Esophagus muscularis mucosa (tissue), 4 donors: ENCODE measurements at regions of chr9 and their contacts with region 1.

Region 1: GRCh38 chr9:97468658-97469448 is 32.6 kb upstream of the TMOD1 start:
- DNase-seq: peak; percentile 93
- H3K4me3 ChIP-seq: no peak overlapping the region
- H3K27ac ChIP-seq: peak overlapping the region; percentile 68 to 79 (median 77)
- H3K4me1 ChIP-seq: peaks cover 15 to 23% (median 21%) of the 10 kb centered on the region in 4 donors
- H3K27me3 ChIP-seq: no peaks in the 10 kb centered on the region
- CTCF ChIP-seq: peak; percentile 75 to 95 (median 86)
- EP300 ChIP-seq: no peak
- POLR2A ChIP-seq: no peak

Region 2: DNA sequence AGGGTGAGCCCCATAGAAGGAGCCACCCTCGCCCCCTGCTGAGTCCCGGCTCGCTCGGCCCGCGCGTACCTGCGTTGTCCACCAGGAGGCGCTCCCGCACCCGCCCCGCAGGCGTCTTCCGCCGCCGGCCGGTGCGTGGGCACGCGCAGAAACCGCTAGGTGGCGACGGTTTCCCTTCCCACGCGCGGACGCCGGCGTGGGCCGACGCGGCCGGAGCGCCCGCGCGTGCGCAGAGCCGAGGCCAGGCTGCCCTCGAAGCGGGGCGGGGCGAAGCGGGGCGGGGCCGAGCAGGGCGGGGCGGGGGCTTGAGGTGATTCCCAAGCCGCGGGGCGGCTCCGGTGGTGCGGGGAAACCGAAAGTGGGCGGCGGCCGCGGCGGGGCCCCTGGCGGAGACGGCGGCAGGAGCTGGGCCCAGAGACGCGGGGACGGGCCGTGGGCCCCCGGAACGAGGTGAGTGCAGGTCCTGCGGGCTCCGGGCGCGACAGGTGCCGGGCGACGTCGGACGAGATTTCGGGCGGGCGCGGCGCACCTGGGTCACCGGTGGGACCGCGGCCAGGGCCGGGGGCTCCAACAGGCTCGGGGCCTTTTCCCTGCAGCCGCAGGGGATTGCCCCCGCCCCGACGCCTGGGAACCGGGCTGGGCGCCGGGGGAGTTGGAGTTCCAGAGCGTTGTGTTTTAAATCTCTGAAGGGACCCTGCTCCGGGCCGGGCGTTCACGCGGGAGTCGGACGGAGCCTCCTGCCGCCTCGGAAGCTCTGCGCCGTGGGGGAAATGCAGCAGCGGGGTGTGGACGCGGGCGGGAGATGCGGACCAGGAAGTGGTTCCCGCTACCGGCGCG is 56.8 kb before region 1 on chr9 and contains the start of gene TDRD7:
- intact Hi-C with region 1: loop called (anchors 5 kb)
- DNase-seq: no peak
- H3K4me3 ChIP-seq: peak within 1 kb of the TSS; percentile 80 to 96 (median 92)
- H3K27ac ChIP-seq: peak within 1 kb of the TSS; percentile 85 to 90 (median 88)
- H3K4me1 ChIP-seq: peaks cover 10 to 23% (median 16%) of the 10 kb centered on the region in 4 donors
- H3K27me3 ChIP-seq: no peaks in the 10 kb centered on the region
- CTCF ChIP-seq: peak; percentile 99
- EP300 ChIP-seq: no peak
- POLR2A ChIP-seq: no peak
- total RNA-seq, gene TDRD7: 15.4 to 22.9 (median 16.4) TPM

Region 3: DNA sequence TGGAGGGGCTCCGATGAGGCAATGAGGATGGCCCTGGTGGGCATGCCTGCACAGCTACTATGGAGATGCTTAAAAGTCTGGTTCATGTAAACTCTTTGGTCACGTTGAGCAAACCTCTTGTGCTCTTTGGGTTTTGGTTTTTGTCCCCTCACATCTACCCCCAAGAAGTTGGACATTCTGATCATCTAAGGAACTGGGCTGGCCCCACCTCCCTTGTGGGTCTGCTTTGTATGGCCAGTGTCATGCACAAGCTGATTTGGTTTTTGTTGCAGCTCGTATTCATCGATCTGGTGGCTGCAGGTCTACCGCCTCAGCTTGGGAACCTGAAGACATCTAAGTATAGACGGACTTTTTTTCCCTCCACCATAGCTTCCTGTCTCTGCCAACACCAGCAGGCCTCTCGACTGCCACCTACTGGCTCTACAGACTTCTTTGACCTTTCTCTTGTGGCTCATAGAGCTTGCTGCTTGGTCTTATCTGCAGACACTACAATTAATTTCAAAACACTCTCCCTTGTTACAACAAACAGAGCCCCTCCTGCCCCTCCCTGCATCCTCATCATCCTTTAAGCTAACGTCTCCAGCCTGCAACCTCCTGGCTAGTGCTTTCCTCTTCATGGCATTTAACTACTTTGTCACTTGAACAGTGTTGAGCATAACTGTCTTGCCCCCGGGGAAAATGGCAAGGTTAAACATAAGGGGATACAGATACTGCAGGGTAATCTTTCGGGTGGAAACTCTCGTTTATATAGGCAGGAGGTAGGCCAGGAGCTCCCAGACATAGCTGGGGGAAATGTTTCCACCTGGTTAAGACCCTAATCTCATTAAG is 129.8 kb after region 1 on chr9:
- intact Hi-C with region 1: loop called (anchors 5 kb)
- DNase-seq: peak; percentile 95
- H3K4me3 ChIP-seq: no peak overlapping the region
- H3K27ac ChIP-seq: peak overlapping the region; percentile 69 to 74 (median 72)
- H3K4me1 ChIP-seq: peaks cover 36 to 61% (median 49%) of the 10 kb centered on the region in 4 donors
- H3K27me3 ChIP-seq: no peaks in the 10 kb centered on the region
- CTCF ChIP-seq: peak; percentile 81 to 87 (median 83)
- EP300 ChIP-seq: no peak
- POLR2A ChIP-seq: no peak

Region 4: GRCh38 chr9:97615439-97616072 is 146.7 kb after region 1 on chr9:
- intact Hi-C with region 1: loop called (anchors 1 kb)
- DNase-seq: no peak
- H3K4me3 ChIP-seq: no peak overlapping the region
- H3K27ac ChIP-seq: peak overlapping the region in 3 of 4 donors; percentile 8 to 51 (median 12)
- H3K4me1 ChIP-seq: peaks cover 0 to 12% (median 10%) of the 10 kb centered on the region in 4 donors
- H3K27me3 ChIP-seq: no peaks in the 10 kb centered on the region
- CTCF ChIP-seq: peak; percentile 82 to 92 (median 89)
- EP300 ChIP-seq: no peak
- POLR2A ChIP-seq: no peak

Region 5: GRCh38 chr9:97696803-97697601 is 228.1 kb after region 1 on chr9 and contains the start of gene XPA:
- intact Hi-C with region 1: no loop called
- DNase-seq: peak; percentile 97
- H3K4me3 ChIP-seq: peak within 1 kb of the TSS; percentile 78 to 93 (median 87)
- H3K27ac ChIP-seq: peak within 1 kb of the TSS; percentile 92 to 98 (median 95)
- H3K4me1 ChIP-seq: peaks cover 25 to 47% (median 39%) of the 10 kb centered on the region in 4 donors
- H3K27me3 ChIP-seq: no peaks in the 10 kb centered on the region
- CTCF ChIP-seq: no peak
- EP300 ChIP-seq: no peak
- POLR2A ChIP-seq: peak; percentile 67
- total RNA-seq, gene XPA: 21.2 to 27.1 (median 22.9) TPM